IMR-90 (cell line): ENCODE measurements at regions of chr18 and their contacts with region 1.

Region 1: DNA sequence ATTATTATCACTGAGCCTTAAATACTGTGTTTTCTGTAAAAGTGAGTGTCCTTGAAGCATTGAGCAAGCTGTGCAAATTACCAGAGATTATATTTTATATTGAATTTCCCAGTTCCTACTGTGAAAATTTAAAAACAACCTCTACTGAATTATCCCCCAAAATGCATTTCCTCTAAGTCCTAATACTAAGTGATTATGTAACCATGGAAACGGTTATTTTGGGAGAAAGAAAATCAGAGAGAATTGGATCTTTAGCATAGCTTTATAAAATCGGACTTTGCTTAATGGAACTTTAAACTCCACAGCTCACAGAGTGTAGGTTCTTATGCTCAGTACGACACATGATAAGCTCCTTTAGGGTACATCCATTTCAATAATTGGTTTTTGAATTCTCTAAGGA is 19.3 kb upstream of the CHMP1B start:
- DNase-seq: no peak
- ATAC-seq: no peak
- H3K4me3 ChIP-seq: no peak overlapping the region
- H3K27ac ChIP-seq: no peak overlapping the region
- H3K4me1 ChIP-seq: no peaks in the 10 kb centered on the region
- H3K27me3 ChIP-seq: no peaks in the 10 kb centered on the region
- CTCF ChIP-seq: no peak
- POLR2A ChIP-seq: no peak
- RAD21 ChIP-seq: no peak

Region 2: DNA sequence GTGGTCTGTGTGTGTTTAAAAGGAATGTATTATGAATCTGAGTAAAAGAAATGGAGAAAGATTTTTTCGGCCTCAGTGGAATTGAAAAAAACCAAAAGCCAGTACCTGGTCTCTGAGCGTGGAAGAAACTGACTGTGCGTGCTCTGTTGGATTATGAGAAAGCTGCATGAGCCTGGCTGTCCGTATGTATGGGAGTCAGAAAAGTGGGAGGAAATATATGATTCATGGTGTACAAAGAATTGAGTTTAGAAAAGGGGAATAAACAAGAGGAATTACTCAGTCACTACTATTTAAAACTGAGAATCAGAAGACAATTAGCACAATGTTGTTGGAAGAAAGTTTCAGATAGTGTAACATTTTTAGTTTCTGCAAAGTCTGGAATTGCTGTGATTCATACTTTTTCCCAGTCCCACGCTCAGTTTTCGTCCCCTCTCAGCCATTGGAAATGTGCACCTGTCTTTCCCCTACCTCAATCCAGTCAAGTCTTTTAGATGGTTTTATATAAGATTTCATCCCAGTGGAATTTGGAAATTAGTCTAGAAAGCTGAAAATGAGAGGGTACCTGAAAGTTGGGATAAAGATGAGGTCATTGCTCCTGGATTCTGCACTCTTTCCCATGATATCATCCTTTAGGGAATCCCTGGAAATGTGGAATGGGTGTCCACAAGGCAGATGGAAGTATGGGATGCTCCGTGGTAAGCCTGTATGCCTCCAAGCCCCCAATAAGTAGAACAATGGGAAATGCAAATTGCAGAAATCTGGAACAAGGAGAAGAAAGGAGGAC is 47.1 kb before region 1 on chr18:
- CTCF ChIA-PET with region 1: no interaction called
- POLR2A ChIA-PET with region 1: no interaction called
- dilution Hi-C with region 1: no loop called
- in situ Hi-C with region 1: no loop called
- intact Hi-C with region 1: loop called (anchors 5 kb)
- DNase-seq: no peak
- ATAC-seq: peak; percentile 29; the same call in 1 of the 2 replicates
- H3K4me3 ChIP-seq: no peak overlapping the region
- H3K27ac ChIP-seq: no peak overlapping the region
- H3K4me1 ChIP-seq: peaks cover 6% of the 10 kb centered on the region; the same call in 1 of the 2 replicates
- H3K27me3 ChIP-seq: 0 out of 2 replicates have a peak, but pooled peaks cover under 1% of the 10 kb centered on the region
- CTCF ChIP-seq: no peak
- POLR2A ChIP-seq: no peak
- RAD21 ChIP-seq: no peak

Region 3: GRCh38 chr18:11883153-11883552 is 51.2 kb after region 1 on chr18:
- CTCF ChIA-PET with region 1: no interaction called
- POLR2A ChIA-PET with region 1: no interaction called
- dilution Hi-C with region 1: no loop called
- in situ Hi-C with region 1: no loop called
- intact Hi-C with region 1: no loop called
- DNase-seq: peak; percentile 41
- ATAC-seq: peak; percentile 80
- H3K4me3 ChIP-seq: no peak overlapping the region
- H3K27ac ChIP-seq: no peak overlapping the region; the same call in 1 of the 2 replicates
- H3K4me1 ChIP-seq: no peaks in the 10 kb centered on the region
- H3K27me3 ChIP-seq: no peaks in the 10 kb centered on the region
- CTCF ChIP-seq: no peak
- POLR2A ChIP-seq: no peak
- RAD21 ChIP-seq: no peak